Astrocyte of the cerebellum (primary cell): ENCODE measurements at regions of chr4 and their contacts with region 1.

Region 1: DNA sequence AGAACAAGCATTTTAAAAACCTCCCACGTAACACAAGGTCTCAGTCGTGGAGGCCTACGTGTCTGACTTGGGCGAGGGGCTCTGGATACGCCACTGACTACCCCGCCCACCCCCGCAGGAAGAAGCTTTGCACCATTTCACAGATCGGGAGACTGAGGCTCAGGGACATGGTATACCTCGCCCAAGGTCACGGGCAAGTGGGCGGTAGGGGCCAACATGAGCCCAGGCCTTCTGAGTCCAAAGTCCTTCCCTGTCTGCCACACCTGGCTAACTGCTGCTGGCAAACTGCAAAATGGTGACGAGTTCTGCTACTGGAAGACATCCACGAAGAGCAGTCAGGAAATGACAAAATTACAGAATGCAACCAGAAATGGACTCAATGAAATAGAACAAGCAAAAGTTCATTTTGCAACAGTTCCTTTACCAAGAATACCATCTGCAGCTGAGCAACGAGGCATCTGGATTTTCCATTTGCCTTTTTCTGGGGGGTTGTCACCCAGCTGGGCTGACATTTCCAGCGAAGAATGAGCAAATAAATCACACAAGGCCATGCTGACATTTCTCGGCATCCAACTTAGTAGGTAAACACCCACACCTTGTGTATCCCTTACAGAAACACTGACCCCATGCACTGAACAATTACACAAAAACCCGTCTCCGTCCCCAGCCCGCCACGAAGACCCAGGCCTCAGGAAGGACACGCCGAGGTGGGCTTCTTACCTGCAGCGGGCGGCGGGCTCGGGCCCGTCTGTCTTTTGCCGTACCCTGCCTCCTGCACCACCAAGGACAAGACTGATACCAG is 70.2 kb upstream of the AFAP1 start:
- DNase-seq: no peak
- H3K4me3 ChIP-seq: no peak overlapping the region
- CTCF ChIP-seq: no peak

Region 2: DNA sequence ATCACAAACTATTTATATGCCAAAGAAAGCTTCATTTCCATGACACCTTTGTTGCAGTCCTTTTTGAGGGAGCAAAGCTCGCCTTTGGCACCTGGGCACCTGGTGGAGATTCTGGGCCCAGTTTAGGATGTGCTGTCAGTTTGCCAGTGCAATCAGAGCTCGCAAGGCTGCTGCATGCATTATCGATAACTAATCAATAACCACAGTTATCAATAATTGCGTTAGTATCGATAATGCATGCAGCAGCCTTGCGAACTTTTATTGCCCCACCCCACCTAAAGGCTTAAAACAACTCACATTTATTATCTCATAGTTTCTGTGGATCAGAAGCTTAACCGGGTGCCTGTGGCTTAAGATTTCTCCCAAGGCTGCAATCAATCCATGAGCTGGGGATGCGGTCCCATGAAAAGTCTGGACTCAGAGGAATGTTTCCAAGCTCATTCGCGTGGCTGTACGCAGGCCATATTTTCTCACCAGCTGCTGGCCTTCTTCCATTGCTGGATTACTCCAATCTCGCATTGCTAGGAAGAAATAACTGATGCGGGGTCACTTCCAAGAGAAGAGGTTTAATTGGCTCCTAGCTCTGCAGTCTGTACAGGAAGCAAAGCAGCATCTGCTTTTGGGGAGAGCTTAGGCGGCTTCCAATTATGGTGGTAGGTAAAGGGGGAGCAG is 64.1 kb before region 1 on chr4:
- in situ Hi-C with region 1: loop called (anchors 5 kb)
- DNase-seq: no peak
- H3K4me3 ChIP-seq: no peak overlapping the region
- CTCF ChIP-seq: no peak

Region 3: GRCh38 chr4:8101213-8102075 is 91.5 kb after region 1 on chr4:
- in situ Hi-C with region 1: loop called (anchors 5 kb)
- DNase-seq: no peak
- H3K4me3 ChIP-seq: no peak overlapping the region
- CTCF ChIP-seq: no peak